ENCODE measurements at regions of chr3 and their contacts with region 1.

Region 1: DNA sequence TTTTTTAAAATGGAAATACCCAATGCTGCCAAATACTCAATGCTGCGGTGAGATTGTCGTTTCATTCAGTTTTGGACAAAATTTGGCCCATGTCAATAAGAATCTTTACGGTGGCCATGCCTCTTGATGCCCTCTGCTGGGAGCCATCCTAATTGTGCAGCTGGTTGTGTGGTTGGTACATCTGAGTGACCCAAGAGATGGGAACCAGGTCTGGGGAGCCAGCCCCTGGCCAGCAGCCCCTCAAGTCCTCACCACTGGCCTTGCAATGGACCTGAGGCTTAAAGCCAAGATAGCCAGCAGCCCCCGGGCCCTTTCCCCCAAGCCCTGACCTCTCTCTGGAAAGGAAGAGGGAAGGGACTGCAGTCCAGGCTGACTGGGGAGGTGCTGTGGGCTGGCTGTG is 36.4 kb upstream of the ESYT3 start:
- DNase-seq: no peak
- ATAC-seq: no peak

Region 2: GRCh38 chr3:138349926-138350665 is 47.9 kb before region 1 on chr3:
- intact Hi-C with region 1: loop called in 1 of 2 experiments (anchors 5 kb)
- DNase-seq: peak; percentile 49
- ATAC-seq: peak in 1 of 2 donors; percentile 7